Dorsolateral prefrontal cortex (tissue), 120 donors: ENCODE measurements at regions of chr17 and their contacts with region 1.

Region 1: DNA sequence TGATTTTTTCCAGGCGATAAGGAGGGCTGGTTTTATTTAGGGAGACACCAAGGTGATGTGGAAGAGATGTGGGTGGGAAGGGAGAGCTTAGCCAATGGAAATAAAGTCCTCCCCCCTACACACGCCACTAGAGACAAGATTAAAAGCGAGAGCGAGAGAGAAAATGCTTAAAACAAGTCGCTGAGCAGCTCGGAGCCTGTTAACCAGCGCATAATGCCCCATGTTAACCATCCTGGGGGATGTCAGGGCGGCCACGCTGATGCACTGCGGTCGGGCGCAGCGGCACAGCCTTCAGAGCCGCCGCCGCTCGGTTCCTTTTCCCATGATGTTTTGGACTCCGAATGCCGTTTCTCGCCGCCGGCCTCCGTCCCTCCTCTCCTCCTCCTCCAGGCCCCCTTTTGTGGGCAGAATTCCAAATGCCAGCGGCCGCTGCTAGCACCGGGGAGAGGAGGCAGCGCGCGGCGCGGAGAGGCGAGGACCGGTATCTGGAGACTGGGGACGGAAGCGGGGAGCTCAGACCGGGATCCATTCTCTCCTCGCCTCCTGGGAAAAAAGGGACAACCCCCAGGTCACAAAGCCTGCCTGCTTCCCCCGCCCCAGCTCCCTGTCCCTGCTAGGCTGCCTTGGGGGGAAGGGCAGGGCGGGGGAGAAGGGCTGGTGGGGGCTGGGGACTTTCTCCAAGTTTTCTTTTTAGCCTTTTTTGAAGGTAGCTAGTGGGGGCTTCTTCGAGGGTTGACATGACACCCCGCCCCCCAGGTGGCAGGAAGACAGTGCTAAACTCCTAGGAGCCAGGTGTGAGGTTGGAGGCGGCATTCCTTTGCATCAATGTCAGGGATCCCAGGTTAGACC is 98.1 kb upstream of the CCL2 start:
- DNase-seq: peak in 7 of 10 donors; percentile 28 to 64 (median 46)
- H3K4me3 ChIP-seq: peak overlapping the region in 58 of 59 donors; percentile 7 to 66 (median 51)
- H3K27ac ChIP-seq: peak overlapping the region in 40 of 59 donors; percentile 5 to 82 (median 59)
- H3K27me3 ChIP-seq: peaks cover 0 to 58% (median 20%) of the 10 kb centered on the region in 45 donors
- CTCF ChIP-seq: no peak

Region 2: DNA sequence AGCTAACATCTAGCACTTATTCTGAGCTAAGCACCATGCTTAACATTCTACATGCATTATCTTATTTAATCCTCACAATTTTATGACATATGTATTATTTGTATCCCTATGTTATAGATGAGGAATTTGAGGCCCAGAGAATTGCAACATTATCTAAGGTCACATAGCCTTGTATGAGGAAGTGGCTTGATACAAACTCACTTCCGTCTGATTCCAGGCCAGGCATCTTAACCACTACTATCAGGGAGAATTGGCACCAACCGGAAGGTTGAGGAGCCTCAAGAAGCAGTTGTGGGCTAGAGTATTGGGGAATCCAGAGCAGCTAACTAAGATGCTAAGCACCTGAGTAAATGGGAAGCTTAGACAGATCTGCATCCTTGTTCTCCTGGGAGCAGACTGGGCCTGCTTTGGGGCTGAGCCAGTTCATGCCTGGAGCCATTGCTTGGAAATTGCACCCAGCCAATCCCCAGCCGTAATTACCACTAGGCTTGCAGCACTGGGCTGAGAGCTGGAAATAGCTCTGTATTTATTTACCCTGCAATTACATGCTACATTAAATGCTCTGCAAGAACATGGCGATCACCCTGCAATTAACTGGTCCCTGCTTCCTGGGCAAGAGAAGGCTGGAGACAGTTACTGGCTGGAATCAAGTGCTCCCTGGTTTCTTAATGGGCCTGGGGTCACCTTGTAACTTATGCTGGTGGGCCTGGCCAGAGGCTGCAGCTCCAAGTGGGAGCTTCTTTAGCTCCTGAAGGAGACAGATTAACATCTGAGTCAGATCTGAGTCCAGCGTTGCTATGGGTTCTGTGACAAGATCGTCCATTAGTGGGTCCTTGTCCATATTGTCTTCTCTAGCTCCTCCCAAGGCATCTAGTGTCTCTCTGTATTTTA is 175.0 kb before region 1 on chr17:
- intact Hi-C with region 1: loop called in 1 of 2 experiments (anchors 10 kb)
- DNase-seq: peak in 2 of 10 donors; percentile 32 to 50
- H3K4me3 ChIP-seq: no peak overlapping the region
- H3K27ac ChIP-seq: peak overlapping the region in 28 of 59 donors; percentile 1 to 84 (median 38)
- H3K27me3 ChIP-seq: peaks cover 0 to under 1% (median 0%) of the 10 kb centered on the region in 45 donors
- CTCF ChIP-seq: no peak